ENCODE measurements at regions of chr20 and their contacts with region 1.

Region 1: DNA sequence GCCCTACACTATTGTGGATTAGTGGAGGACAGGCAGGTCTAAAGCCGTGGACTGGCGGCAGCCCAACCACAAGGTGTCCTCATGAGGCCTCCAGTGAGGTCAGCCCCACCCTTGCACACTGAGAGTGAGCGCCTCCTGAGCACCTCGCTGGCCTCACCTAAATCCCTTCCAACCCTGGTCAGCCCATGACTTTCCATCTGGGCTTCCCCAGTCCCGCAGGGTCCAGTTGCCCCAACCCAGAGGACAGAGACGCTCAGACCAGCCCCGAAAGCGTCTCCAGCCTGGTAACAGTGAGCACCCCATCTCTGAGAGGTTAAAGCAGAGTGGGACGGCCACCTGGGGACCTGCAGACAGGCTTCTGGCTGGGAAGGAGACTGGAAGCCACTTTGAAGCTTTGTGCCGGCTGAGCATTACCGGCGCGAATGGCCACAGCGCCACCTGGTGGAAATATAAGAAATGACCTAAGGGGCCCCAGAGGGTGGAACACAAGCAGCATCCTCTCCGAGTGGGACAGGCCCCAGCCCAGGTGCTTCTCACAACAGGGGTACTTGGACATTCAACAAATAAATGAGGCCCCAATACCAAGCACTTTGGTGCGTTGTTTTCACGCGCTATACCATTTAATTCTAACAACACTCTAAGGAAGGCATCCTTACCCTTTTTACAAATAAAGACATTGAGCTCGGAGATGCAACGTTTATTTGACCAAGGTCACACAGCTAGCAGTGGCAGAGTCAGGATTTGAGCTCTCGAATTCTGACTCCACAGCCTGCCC is 65.7 kb upstream of the TOP1 start:
- DNase-seq: no peak
- H3K4me3 ChIP-seq: no peak overlapping the region
- CTCF ChIP-seq: peak; percentile 63

Region 2: DNA sequence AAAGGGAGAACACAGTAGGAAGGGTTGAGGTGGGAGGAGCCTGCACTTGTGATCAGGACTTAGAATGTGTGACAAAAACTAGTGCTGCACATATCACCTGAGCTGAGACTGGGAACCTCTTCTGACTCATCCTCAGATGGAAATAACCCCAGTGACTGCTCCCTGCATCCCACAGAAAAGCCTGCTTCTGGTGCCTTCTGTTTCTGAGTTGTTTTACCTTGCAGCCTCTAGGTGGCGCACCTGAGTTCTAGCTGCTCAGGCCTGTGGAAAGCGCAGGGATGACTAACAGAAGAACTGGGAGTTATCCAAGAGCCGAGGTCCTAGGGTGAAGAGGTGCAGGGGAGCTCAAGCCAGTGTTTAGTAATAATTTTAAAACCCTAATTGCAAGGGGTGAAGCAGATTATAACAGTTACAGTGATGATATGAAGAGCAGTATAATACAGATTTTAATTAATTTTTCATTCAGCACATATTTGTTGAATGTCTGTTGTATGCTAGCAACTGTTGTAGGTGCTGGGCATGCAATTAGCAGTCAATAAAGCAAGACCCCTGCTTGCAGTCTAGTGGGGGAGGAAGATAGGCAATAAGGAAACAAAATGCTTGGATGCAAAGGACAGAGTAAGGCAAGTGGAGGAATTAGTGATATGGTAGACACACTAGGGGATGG is 1698.3 kb before region 1 on chr20:
- CTCF ChIA-PET with region 1: interaction called, 20 read pairs
- POLR2A ChIA-PET with region 1: no interaction called
- DNase-seq: peak; percentile 19
- H3K4me3 ChIP-seq: no peak overlapping the region
- CTCF ChIP-seq: peak; percentile 90

Region 3: DNA sequence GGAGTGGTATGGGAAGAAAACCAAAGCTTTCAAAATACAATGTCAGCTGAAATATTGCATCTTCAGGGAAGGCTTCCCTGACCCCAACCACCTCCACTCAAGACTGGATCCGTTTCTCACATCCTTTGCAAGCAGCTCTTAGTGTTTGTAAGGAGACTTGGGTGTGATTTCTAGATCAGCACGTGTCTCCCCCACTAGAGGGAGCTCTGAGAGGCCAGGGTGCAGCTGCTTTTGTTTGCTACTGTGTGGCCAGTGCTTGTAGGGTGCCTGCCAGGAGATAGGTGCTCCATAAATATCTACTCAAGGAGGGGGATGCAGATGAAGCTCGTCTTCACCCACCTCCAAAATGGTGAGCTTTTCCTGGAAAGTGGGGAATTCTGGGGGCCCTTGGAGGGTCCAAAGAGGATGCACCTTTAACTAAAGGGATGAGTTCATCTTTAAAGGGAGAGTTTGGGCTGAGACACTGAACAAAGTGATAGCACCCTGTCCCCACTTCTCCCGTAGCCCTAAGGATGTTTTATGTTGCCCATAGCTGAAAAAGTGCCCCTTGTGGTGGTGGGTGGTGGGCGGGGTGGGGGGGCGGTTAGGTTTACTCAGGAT is 221.3 kb before region 1 on chr20:
- CTCF ChIA-PET with region 1: interaction called, 46 read pairs
- POLR2A ChIA-PET with region 1: no interaction called
- DNase-seq: no peak
- H3K4me3 ChIP-seq: no peak overlapping the region
- CTCF ChIP-seq: peak; percentile 63

Region 4: GRCh38 chr20:40945754-40946450 is 17.0 kb before region 1 on chr20:
- CTCF ChIA-PET with region 1: interaction called, 48 read pairs
- POLR2A ChIA-PET with region 1: no interaction called
- DNase-seq: no peak
- H3K4me3 ChIP-seq: no peak overlapping the region
- CTCF ChIP-seq: peak; percentile 66

Region 5: DNA sequence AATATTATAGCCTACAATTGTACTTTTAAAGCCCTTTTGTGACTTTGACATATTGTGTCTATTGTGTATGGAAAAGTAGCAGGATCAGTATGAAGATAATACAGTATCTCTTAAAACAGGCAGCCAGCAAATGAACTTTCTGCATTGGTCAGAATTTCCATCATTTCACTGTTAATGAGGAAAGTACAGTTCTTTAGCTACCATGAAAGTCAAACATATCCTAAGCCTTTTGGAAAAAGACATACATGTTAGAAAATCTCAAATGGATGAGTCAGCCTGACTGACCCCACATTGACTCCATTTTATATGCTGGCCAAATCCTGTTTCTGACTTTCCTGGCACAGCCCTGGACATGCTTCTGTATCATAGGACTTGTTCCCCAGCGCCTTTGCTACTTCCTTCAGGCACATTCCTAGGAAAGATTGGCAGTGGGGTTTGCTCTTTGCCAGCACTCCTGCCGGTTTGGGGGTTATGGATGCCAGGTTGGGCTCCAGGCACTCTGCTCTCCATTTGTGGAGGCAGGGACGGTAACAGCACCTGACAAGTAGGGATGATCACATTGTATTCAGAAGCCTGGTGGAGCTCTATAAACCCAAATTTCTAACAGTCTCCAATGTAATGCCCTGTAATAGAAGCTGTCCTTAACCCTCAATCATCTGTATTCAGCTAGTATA is 109.4 kb after region 1 on chr20:
- CTCF ChIA-PET with region 1: interaction called, 26 read pairs
- POLR2A ChIA-PET with region 1: no interaction called
- DNase-seq: peak; percentile 50
- H3K4me3 ChIP-seq: no peak overlapping the region
- CTCF ChIP-seq: no peak

Region 6: GRCh38 chr20:41095110-41095969 is 132.4 kb after region 1 on chr20:
- CTCF ChIA-PET with region 1: interaction called, 182 read pairs
- POLR2A ChIA-PET with region 1: no interaction called
- DNase-seq: peak; percentile 14
- H3K4me3 ChIP-seq: no peak overlapping the region
- CTCF ChIP-seq: peak; percentile 67